ENCODE measurements at regions of chr9 and their contacts with region 1.

Region 1: GRCh38 chr9:128296337-128297220 is 20.5 kb downstream of the SWI5 start:
- DNase-seq: peak in 1 of 2 experiments; percentile 78
- H3K4me3 ChIP-seq: no peak overlapping the region
- H3K27ac ChIP-seq: peak overlapping the region; percentile 97
- H3K4me1 ChIP-seq: peaks cover 56% of the 10 kb centered on the region
- H3K27me3 ChIP-seq: no peaks in the 10 kb centered on the region
- CTCF ChIP-seq: no peak

Region 2: DNA sequence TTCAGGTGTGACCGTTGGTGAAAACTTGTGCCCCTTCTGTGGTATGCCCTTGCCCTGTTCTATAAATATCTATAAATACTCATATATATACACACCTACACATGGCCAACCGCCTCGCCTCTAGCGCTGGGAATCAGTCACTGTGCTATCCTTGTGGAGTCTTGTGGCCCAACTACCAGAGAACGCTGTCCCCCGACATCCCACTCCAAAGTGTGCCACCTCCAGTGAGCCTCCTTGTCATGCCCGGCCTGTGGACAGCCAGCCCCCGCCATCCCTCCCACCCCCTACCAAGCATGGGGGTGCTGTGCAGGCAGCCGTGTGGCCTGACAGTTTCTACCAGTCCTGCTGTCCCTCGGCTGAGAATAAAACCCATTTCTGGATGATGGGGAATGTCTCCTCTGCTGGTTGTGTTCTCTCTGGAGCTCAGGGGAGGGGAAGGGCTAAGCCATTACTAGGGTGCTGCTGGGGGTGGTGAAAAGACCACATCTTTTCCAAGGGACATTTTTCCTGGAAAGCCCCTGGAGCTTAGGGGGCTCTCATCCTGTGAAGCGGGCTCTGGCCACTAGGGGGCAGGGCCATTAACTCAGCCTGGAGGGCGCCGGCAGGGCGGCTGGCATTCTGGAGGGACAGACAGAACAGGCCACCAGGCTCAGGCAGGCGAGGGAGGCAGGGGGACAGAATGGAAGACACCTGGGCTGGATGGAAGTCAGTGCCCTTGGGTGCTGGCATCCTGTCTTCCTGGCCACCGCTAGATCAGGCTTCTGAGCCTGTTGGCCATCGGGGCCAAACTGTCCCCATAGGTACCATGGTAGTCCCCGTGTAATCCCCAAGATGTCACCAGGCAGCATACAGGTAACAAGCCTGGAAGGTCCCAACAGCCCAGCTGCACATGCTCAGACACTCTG is 41.5 kb before region 1 on chr9:
- CTCF ChIA-PET with region 1: interaction called, 10 read pairs
- POLR2A ChIA-PET with region 1: no interaction called
- intact Hi-C with region 1: no loop called
- DNase-seq: peak in 1 of 2 experiments; percentile 68
- H3K4me3 ChIP-seq: no peak overlapping the region
- H3K27ac ChIP-seq: no peak overlapping the region
- H3K4me1 ChIP-seq: no peaks in the 10 kb centered on the region
- H3K27me3 ChIP-seq: no peaks in the 10 kb centered on the region
- CTCF ChIP-seq: peak; percentile 93

Region 3: GRCh38 chr9:128322404-128323211 is 26.0 kb after region 1 on chr9 and contains the starts of genes COQ4 and TRUB2:
- CTCF ChIA-PET with region 1: no interaction called
- POLR2A ChIA-PET with region 1: no interaction called
- intact Hi-C with region 1: loop called (anchors 1 kb)
- DNase-seq: peak; percentile 88 to 94
- H3K4me3 ChIP-seq: peak within 1 kb of the TSS; percentile 100
- H3K27ac ChIP-seq: peak within 1 kb of the TSS; percentile 74
- H3K4me1 ChIP-seq: peaks cover 21% of the 10 kb centered on the region
- H3K27me3 ChIP-seq: no peaks in the 10 kb centered on the region
- CTCF ChIP-seq: no peak
- total RNA-seq, gene COQ4: 81.8 and 89.5 TPM in 2 replicates
- total RNA-seq, gene TRUB2: 47.6 and 62.1 TPM in 2 replicates

Region 4: GRCh38 chr9:128339771-128340690 is 43.5 kb after region 1 on chr9 and contains the start of gene SLC27A4:
- CTCF ChIA-PET with region 1: interaction called, 14 read pairs
- POLR2A ChIA-PET with region 1: interaction called, 7 read pairs
- intact Hi-C with region 1: loop called (anchors 1 kb)
- DNase-seq: peak; percentile 79 to 92
- H3K4me3 ChIP-seq: peak within 1 kb of the TSS; percentile 85
- H3K27ac ChIP-seq: peak within 1 kb of the TSS; percentile 68
- H3K4me1 ChIP-seq: peaks cover 9% of the 10 kb centered on the region; the same call in 1 of the 2 replicates
- H3K27me3 ChIP-seq: no peaks in the 10 kb centered on the region
- CTCF ChIP-seq: no peak
- total RNA-seq, gene SLC27A4: 27.3 and 30.4 TPM in 2 replicates

Region 5: DNA sequence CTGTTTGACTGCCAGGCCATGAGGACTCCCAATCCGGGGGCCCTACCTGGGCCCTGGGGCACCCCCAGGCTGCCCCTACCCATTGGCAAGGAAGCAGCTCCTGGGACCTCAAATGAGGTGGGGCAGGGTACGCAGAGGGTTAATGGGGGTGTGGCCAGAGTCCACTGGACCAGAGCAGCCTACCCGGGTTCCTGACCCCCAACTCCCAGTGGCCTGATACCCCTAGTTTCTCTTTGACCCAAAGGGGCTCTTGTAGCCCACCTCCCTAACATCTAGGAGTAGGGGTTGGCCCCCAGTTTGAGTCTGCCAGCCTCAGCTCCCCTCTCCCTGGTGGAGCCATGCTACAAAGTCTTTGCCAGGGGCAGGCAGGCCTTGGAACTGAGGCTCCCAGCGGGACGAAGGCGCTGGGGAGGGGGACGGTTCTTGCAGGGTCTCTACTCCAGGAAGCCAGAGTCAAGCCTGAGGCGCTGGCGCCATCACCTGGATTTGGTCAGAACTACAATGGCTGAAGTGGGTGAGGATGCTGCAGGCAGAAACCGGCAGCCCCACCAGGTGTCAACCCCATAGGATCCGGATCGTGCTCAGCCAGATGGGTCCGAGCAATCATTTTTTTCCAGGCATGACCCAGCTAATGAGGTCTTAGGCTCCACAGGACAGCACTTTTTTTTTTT is 115.7 kb after region 1 on chr9:
- CTCF ChIA-PET with region 1: interaction called, 5 read pairs
- POLR2A ChIA-PET with region 1: no interaction called
- intact Hi-C with region 1: loop called (anchors 1 kb)
- DNase-seq: peak in 1 of 2 experiments; percentile 65
- H3K4me3 ChIP-seq: no peak overlapping the region
- H3K27ac ChIP-seq: no peak overlapping the region
- H3K4me1 ChIP-seq: peaks cover 15% of the 10 kb centered on the region
- H3K27me3 ChIP-seq: no peaks in the 10 kb centered on the region
- CTCF ChIP-seq: peak; percentile 71

Region 6: GRCh38 chr9:128540634-128541360 is 244.2 kb after region 1 on chr9:
- CTCF ChIA-PET with region 1: interaction called, 10 read pairs
- POLR2A ChIA-PET with region 1: no interaction called
- intact Hi-C with region 1: no loop called
- DNase-seq: no peak
- H3K4me3 ChIP-seq: no peak overlapping the region
- H3K27ac ChIP-seq: no peak overlapping the region
- H3K4me1 ChIP-seq: no peaks in the 10 kb centered on the region
- H3K27me3 ChIP-seq: no peaks in the 10 kb centered on the region
- CTCF ChIP-seq: no peak

Region 7: GRCh38 chr9:128635283-128636023 is 338.9 kb after region 1 on chr9:
- CTCF ChIA-PET with region 1: no interaction called
- POLR2A ChIA-PET with region 1: no interaction called
- intact Hi-C with region 1: loop called (anchors 5 kb)
- DNase-seq: peak; percentile 95 to 100
- H3K4me3 ChIP-seq: peak overlapping the region; percentile 50
- H3K27ac ChIP-seq: peak overlapping the region; percentile 93
- H3K4me1 ChIP-seq: peaks cover 32% of the 10 kb centered on the region
- H3K27me3 ChIP-seq: no peaks in the 10 kb centered on the region
- CTCF ChIP-seq: peak; percentile 92

Region 8: GRCh38 chr9:128809832-128810231 is 513.3 kb after region 1 on chr9:
- CTCF ChIA-PET with region 1: no interaction called
- POLR2A ChIA-PET with region 1: no interaction called
- intact Hi-C with region 1: no loop called
- DNase-seq: no peak
- H3K4me3 ChIP-seq: no peak overlapping the region
- H3K27ac ChIP-seq: no peak overlapping the region
- H3K4me1 ChIP-seq: no peaks in the 10 kb centered on the region
- H3K27me3 ChIP-seq: no peaks in the 10 kb centered on the region
- CTCF ChIP-seq: no peak

Measured in PC-9 (cell line).